ENCODE measurements at regions of chrX and their contacts with region 1.

Region 1: GRCh38 chrX:154478728-154479622 is at the start of gene LAGE3:
- DNase-seq: peak; percentile 95
- H3K4me3 Mint-ChIP-seq: peak within 1 kb of the TSS; percentile 83
- H3K27ac Mint-ChIP-seq: peak within 1 kb of the TSS; percentile 94
- H3K4me1 Mint-ChIP-seq: peaks cover 30% of the 10 kb centered on the region
- H3K27me3 Mint-ChIP-seq: no peaks in the 10 kb centered on the region
- total RNA-seq, gene LAGE3: 42.3 to 42.8 TPM

Region 2: GRCh38 chrX:153610429-153611261 is 868.3 kb before region 1 on chrX:
- CTCF ChIA-PET with region 1: no interaction called
- intact Hi-C with region 1: no loop called
- DNase-seq: peak; percentile 35
- H3K4me3 Mint-ChIP-seq: peak overlapping the region; percentile 63
- H3K27ac Mint-ChIP-seq: peak overlapping the region; percentile 8
- H3K4me1 Mint-ChIP-seq: peaks cover 9% of the 10 kb centered on the region
- H3K27me3 Mint-ChIP-seq: no peaks in the 10 kb centered on the region

Region 3: GRCh38 chrX:154411322-154411980 is 67.5 kb before region 1 on chrX and contains the start of gene TAFAZZIN:
- CTCF ChIA-PET with region 1: no interaction called
- intact Hi-C with region 1: loop called (anchors 1 kb)
- DNase-seq: peak; percentile 82
- H3K4me3 Mint-ChIP-seq: peak within 1 kb of the TSS; percentile 91
- H3K27ac Mint-ChIP-seq: peak within 1 kb of the TSS; percentile 94
- H3K4me1 Mint-ChIP-seq: peaks cover 13% of the 10 kb centered on the region
- H3K27me3 Mint-ChIP-seq: no peaks in the 10 kb centered on the region
- total RNA-seq, gene TAFAZZIN: 63.7 to 66.5 TPM

Region 4: GRCh38 chrX:154428176-154429010 is 50.6 kb before region 1 on chrX and contains the start of gene ATP6AP1:
- CTCF ChIA-PET with region 1: no interaction called
- intact Hi-C with region 1: loop called (anchors 2 kb)
- DNase-seq: peak; percentile 94
- H3K4me3 Mint-ChIP-seq: peak within 1 kb of the TSS; percentile 74
- H3K27ac Mint-ChIP-seq: peak within 1 kb of the TSS; percentile 63
- H3K4me1 Mint-ChIP-seq: peaks cover 24% of the 10 kb centered on the region
- H3K27me3 Mint-ChIP-seq: no peaks in the 10 kb centered on the region
- total RNA-seq, gene ATP6AP1: 20.3 to 21.1 TPM

Region 5: GRCh38 chrX:154443992-154444754 is 34.8 kb before region 1 on chrX and contains the start of gene FAM50A:
- CTCF ChIA-PET with region 1: no interaction called
- intact Hi-C with region 1: loop called (anchors 5 kb)
- DNase-seq: peak; percentile 65
- H3K4me3 Mint-ChIP-seq: peak within 1 kb of the TSS; percentile 67
- H3K27ac Mint-ChIP-seq: peak within 1 kb of the TSS; percentile 30
- H3K4me1 Mint-ChIP-seq: peaks cover 9% of the 10 kb centered on the region
- H3K27me3 Mint-ChIP-seq: no peaks in the 10 kb centered on the region
- total RNA-seq, gene FAM50A: 39.7 to 43.7 TPM

Region 6: GRCh38 chrX:154458114-154458953 is 20.6 kb before region 1 on chrX and contains the start of gene PLXNA3:
- CTCF ChIA-PET with region 1: no interaction called
- intact Hi-C with region 1: loop called (anchors 2 kb)
- DNase-seq: peak; percentile 41
- H3K4me3 Mint-ChIP-seq: peak within 1 kb of the TSS; percentile 91
- H3K27ac Mint-ChIP-seq: peak within 1 kb of the TSS; percentile 63
- H3K4me1 Mint-ChIP-seq: peaks cover 12% of the 10 kb centered on the region
- H3K27me3 Mint-ChIP-seq: no peaks in the 10 kb centered on the region
- total RNA-seq, gene PLXNA3: 5.9 to 7.6 TPM

Region 7: DNA sequence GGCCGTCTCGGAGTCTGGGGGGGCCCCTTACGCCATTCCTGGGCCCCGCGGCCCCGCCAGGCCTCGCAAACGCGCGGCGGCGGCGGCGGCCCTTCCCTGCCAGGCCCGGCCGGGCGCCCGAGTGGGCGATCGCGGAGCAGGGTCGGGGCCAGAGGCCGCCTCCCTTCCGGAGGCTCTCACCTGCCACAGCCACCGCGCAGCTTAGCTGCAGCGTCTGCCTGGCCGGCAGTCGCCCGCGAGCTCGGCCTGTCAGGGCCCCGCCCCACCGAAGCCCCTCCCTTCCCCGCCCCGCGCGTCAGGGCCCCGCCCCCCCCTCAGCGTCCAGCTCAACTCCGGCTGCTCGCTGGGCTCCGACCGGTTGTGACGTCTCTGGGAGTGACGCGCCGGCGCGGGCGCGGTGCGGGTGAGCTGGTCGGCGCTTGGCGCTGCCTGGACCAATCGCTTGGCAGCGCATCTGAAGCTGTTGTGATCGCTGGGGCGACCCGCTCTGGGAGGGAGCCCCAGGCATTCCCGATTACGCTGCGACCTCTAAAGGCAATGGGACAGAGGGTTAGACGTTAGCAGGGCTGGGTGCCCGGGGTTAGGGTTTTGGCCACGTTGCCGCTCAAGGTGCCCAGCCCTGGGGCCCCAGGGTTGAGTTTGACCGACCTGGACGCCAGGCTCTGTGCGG is 11.6 kb after region 1 on chrX and contains the start of gene SLC10A3:
- CTCF ChIA-PET with region 1: interaction called, 3 read pairs
- intact Hi-C with region 1: loop called (anchors 1 kb)
- DNase-seq: peak; percentile 92
- H3K4me3 Mint-ChIP-seq: peak within 1 kb of the TSS; percentile 86
- H3K27ac Mint-ChIP-seq: peak within 1 kb of the TSS; percentile 88
- H3K4me1 Mint-ChIP-seq: peaks cover 20% of the 10 kb centered on the region
- H3K27me3 Mint-ChIP-seq: no peaks in the 10 kb centered on the region
- total RNA-seq, gene SLC10A3: 6.7 to 6.9 TPM

Region 8: GRCh38 chrX:154515878-154516655 is 37.1 kb after region 1 on chrX and contains the start of gene FAM3A:
- CTCF ChIA-PET with region 1: no interaction called
- intact Hi-C with region 1: loop called (anchors 2 kb)
- DNase-seq: peak; percentile 95
- H3K4me3 Mint-ChIP-seq: peak within 1 kb of the TSS; percentile 83
- H3K27ac Mint-ChIP-seq: peak within 1 kb of the TSS; percentile 79
- H3K4me1 Mint-ChIP-seq: peaks cover 23% of the 10 kb centered on the region
- H3K27me3 Mint-ChIP-seq: no peaks in the 10 kb centered on the region
- total RNA-seq, gene FAM3A: 17.8 to 21.4 TPM